Naive thymus-derived CD8-positive, alpha-beta T cell (primary cell): ENCODE measurements at regions of chr12 and their contacts with region 1.

Region 1: DNA sequence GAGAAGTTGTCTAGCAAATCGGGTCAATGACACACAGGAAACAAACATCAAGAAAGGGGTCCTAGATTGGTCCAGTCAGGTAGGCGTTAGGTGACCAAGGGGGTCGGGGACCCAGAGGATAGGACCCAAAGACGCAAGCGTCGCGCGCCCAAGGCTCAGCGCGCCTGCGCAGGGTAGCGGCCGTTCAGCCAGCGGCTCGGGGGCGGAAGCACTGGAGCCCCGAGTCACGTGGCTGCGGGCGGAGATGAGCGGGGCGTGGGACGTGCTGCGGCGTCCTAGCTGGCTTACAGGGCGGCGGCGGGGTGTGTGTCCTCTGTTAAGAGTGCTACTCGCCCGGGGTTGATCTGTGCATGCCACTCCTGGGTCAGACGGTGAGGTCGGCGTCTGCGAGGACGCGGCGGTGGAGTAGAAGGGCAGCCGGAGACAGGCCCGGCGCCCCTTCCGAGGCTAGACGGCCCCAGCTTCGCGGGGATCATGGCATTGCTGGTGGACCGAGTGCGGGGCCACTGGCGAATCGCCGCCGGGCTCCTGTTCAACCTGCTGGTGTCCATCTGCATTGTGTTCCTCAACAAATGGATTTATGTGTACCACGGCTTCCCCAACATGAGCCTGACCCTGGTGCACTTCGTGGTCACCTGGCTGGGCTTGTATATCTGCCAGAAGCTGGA is at the start of gene SLC35E3:
- DNase-seq: peak; percentile 83 to 94 (median 88)
- ATAC-seq: peak; percentile 98 to 99
- H3K4me3 Mint-ChIP-seq: peak within 1 kb of the TSS; percentile 95 to 98 (median 98)
- H3K27ac Mint-ChIP-seq: peak within 1 kb of the TSS; percentile 68 to 98 (median 96)
- H3K4me1 Mint-ChIP-seq: peaks cover 25 to 56% (median 47%) of the 10 kb centered on the region in 4 donors
- H3K27me3 Mint-ChIP-seq: no peaks in the 10 kb centered on the region
- polyA plus RNA-seq, gene SLC35E3: 10.9 to 12.0 (median 12.0) TPM

Region 2: DNA sequence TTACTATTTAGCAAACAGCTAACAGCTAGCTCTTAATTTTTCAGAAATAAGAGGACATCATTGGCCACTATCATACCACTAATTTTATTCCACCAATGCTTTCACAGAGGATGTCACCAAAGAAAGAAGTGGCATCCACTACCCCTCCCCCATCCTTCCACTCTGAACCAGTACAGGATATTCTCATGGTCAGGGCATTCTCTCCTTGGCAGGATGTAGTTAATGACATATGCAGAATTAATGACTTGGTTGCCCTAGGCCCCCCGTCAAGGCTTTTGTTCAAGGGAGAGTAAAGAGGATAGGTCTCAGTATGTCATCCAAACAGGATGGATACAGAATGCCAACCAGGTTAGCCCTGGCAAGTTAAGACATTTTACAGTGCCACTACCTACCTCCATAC is 78.1 kb before region 1 on chr12:
- POLR2A ChIA-PET with region 1: no interaction called
- DNase-seq: no peak
- ATAC-seq: peak; percentile 14 to 30
- H3K4me3 Mint-ChIP-seq: peak overlapping the region in 1 of 10 donors; percentile 27
- H3K27ac Mint-ChIP-seq: peak overlapping the region in 8 of 10 donors; percentile 30 to 86 (median 70)
- H3K4me1 Mint-ChIP-seq: peaks cover 23 to 68% (median 49%) of the 10 kb centered on the region in 4 donors
- H3K27me3 Mint-ChIP-seq: no peaks in the 10 kb centered on the region

Region 3: GRCh38 chr12:68792952-68793835 is 47.2 kb after region 1 on chr12:
- POLR2A ChIA-PET with region 1: no interaction called
- DNase-seq: peak in 6 of 10 donors; percentile 11 to 54 (median 29)
- ATAC-seq: peak; percentile 79 to 80
- H3K4me3 Mint-ChIP-seq: no peak overlapping the region
- H3K27ac Mint-ChIP-seq: no peak overlapping the region
- H3K4me1 Mint-ChIP-seq: peaks cover 0 to 4% (median 2%) of the 10 kb centered on the region in 4 donors
- H3K27me3 Mint-ChIP-seq: no peaks in the 10 kb centered on the region

Region 4: GRCh38 chr12:68807576-68808387 is 61.7 kb after region 1 on chr12 and contains the start of gene MDM2:
- POLR2A ChIA-PET with region 1: interaction called, 57 read pairs
- DNase-seq: peak; percentile 94 to 98 (median 97)
- ATAC-seq: peak; percentile 87 to 91
- H3K4me3 Mint-ChIP-seq: peak within 1 kb of the TSS; percentile 89 to 97 (median 94)
- H3K27ac Mint-ChIP-seq: peak within 1 kb of the TSS; percentile 94 to 99 (median 98)
- H3K4me1 Mint-ChIP-seq: peaks cover 7 to 36% (median 22%) of the 10 kb centered on the region in 4 donors
- H3K27me3 Mint-ChIP-seq: no peaks in the 10 kb centered on the region
- polyA plus RNA-seq, gene MDM2: 7.6 to 17.9 (median 12.8) TPM

Region 5: GRCh38 chr12:68844788-68845695 is 99.0 kb after region 1 on chr12:
- POLR2A ChIA-PET with region 1: no interaction called
- DNase-seq: no peak
- ATAC-seq: no peak
- H3K4me3 Mint-ChIP-seq: no peak overlapping the region
- H3K27ac Mint-ChIP-seq: peak overlapping the region in 6 of 10 donors; percentile 9 to 75 (median 36)
- H3K4me1 Mint-ChIP-seq: peaks cover 0 to 6% (median 4%) of the 10 kb centered on the region in 4 donors
- H3K27me3 Mint-ChIP-seq: no peaks in the 10 kb centered on the region

Region 6: GRCh38 chr12:68958322-68958721 is 212.3 kb after region 1 on chr12:
- POLR2A ChIA-PET with region 1: no interaction called
- DNase-seq: peak in 1 of 10 donors; percentile 3
- ATAC-seq: peak in 1 of 2 donors; percentile 32
- H3K4me3 Mint-ChIP-seq: peak overlapping the region in 3 of 10 donors; percentile 2 to 19 (median 15)
- H3K27ac Mint-ChIP-seq: peak overlapping the region in 4 of 10 donors; percentile 3 to 45 (median 33)
- H3K4me1 Mint-ChIP-seq: peaks cover 7 to 11% (median 10%) of the 10 kb centered on the region in 4 donors
- H3K27me3 Mint-ChIP-seq: no peaks in the 10 kb centered on the region